Right ventricle myocardium inferior (tissue), 1 donor: ENCODE measurements at regions of chr7 and their contacts with region 1.

Region 1: GRCh38 chr7:123154231-123154860 is 45.4 kb downstream of the SLC13A1 start:
- DNase-seq: no peak
- ATAC-seq: peak; percentile 80

Region 2: GRCh38 chr7:122219253-122219865 is 935.0 kb before region 1 on chr7:
- intact Hi-C with region 1: loop called (anchors 5 kb)
- DNase-seq: no peak
- ATAC-seq: no peak

Region 3: GRCh38 chr7:122550545-122550944 is 603.8 kb before region 1 on chr7:
- intact Hi-C with region 1: loop called (anchors 10 kb)
- DNase-seq: no peak
- ATAC-seq: no peak

Region 4: DNA sequence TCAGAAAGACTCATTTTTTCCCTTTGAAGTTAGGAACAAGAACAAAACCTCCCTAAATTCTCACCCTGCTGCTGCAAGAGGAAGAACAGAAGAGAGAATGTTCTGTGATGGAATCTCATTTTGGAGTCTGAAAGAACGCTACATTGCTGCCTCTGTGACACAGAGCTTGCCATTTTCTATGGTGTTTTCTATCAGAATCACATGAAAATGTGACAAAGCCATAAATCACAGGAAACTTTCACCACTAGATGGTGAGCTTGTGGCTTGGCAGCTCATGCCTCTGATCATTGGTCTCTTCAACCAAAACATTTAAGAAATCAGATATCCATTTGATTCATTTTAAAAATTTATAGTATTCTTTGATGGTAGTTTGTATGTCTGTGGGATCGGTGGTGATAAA is 351.0 kb before region 1 on chr7:
- intact Hi-C with region 1: loop called (anchors 2 kb)
- DNase-seq: no peak
- ATAC-seq: no peak

Region 5: GRCh38 chr7:122886357-122887081 is 267.8 kb before region 1 on chr7 and contains the start of gene CADPS2:
- intact Hi-C with region 1: loop called (anchors 5 kb)
- DNase-seq: peak; percentile 89
- ATAC-seq: peak; percentile 95
- total RNA-seq, gene CADPS2: 20.8 TPM

Region 6: DNA sequence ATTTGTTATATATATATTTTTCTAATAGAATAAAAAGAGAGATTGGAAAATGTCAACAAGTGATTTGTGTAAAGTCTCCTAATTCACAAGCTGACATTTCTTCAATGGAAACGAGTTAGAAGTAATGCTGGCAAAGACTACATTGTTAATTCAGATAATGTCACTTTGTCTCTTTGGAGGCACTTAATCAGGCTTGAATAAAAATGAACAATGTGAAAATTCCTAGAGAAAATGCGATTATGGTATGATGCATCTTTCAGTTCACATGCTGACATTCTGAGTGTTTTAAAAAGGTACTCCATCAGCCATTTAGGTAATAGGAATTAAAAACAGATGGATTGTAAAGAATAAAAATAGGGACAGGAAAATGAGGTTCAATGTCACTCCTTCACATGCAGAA is 54.6 kb before region 1 on chr7:
- intact Hi-C with region 1: no loop called
- DNase-seq: no peak
- ATAC-seq: no peak

Region 7: DNA sequence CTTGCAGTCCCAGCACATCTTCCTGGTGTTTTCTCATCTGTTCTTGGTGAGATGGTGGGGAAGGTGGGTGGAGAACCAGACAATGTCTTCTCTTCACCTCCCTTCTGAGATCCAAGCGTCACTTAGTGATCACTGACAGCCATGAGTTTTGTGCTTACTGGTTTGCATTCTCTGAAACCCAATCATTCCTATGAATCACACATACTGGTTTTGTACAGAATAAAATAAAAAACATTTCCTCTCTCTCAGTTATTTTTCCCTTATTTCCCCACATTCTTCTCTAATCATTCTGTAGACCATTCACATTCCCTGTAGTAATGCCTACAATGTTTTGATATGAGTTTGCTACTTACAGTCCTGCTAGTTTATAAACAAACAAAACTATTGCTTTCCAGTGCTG is 189.3 kb after region 1 on chr7:
- intact Hi-C with region 1: no loop called
- DNase-seq: no peak
- ATAC-seq: no peak